Activated CD4-positive, alpha-beta T cell treated with anti-CD3 and anti-CD28 coated beads, Interleukin-2, amount 10 ng/mL, durations not matched to agents 24 days and 14 days (primary cell): ENCODE measurements at regions of chr2 and their contacts with region 1.

Region 1: DNA sequence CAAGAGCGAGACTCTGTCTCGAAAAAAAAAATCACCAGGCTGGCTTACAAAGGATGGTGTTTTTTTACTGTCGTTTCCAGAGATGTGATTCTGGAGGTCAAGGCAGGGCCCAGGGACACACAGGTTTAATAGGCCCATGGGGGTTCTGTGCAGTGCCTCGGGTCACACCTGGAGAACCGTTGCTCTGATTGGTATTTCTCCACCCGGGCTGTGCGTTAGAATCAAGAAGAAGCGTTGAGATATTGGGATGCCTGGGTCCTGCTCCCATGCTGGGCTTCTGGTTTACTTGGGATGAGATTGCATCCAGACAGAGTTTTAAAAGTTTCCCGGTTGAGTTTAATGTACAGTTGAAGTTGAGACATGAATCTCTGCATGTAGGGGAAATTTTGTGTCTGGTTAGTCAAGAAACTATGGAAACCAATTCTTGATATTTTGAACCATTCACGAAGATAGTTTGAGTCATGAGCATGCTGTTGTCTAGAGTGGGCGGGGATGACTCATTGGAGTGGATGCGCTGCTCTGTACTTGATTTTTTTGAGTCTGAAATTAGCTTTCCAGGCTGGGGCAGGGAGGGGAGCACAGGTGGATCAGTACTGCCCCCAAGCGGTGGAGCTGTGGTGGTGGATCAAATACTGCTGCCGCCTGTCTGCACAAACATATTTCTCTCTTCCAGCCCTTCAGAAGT is 50.1 kb downstream of the GREB1 start:
- DNase-seq: peak; percentile 88
- H3K4me3 Mint-ChIP-seq: no peak overlapping the region
- H3K27ac Mint-ChIP-seq: peak overlapping the region; percentile 52
- H3K4me1 Mint-ChIP-seq: peaks cover 18% of the 10 kb centered on the region
- H3K27me3 Mint-ChIP-seq: peaks cover 5% of the 10 kb centered on the region

Region 2: GRCh38 chr2:10832203-10832936 is 751.6 kb before region 1 on chr2:
- intact Hi-C with region 1: loop called (anchors 2 kb)
- DNase-seq: peak; percentile 95
- H3K4me3 Mint-ChIP-seq: no peak overlapping the region
- H3K27ac Mint-ChIP-seq: no peak overlapping the region
- H3K4me1 Mint-ChIP-seq: peaks cover 2% of the 10 kb centered on the region
- H3K27me3 Mint-ChIP-seq: peaks cover 29% of the 10 kb centered on the region

Region 3: DNA sequence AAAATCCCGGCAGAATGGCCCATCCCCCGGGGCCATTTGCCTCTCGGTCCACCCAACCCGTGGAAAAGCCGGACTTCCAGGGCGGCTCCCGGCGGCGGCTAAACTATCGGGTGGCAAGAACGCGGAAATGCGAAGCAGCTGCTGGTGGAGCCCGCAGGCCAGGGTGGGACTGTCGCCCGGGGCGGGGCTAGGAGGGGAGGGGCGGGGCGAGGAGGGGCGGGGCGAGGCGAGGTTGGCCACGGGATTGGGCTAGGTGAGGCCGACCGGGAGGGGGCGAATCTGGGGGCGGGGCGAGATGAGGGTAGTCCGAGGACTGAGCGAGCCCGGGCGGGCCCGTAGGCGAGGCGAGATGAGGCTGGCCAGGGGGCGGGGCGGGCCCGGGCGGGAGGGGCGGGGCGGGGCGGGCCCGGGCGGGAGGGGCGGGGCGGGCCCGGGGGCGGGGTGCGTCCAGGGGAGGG is 429.0 kb before region 1 on chr2:
- intact Hi-C with region 1: loop called (anchors 1 kb)
- DNase-seq: peak; percentile 98
- H3K4me3 Mint-ChIP-seq: peak overlapping the region; percentile 86
- H3K27ac Mint-ChIP-seq: peak overlapping the region; percentile 88
- H3K4me1 Mint-ChIP-seq: peaks cover 8% of the 10 kb centered on the region
- H3K27me3 Mint-ChIP-seq: peaks cover 8% of the 10 kb centered on the region

Region 4: GRCh38 chr2:11344342-11344955 is 239.5 kb before region 1 on chr2 and contains the start of gene ROCK2:
- intact Hi-C with region 1: loop called (anchors 1 kb)
- DNase-seq: peak; percentile 92
- H3K4me3 Mint-ChIP-seq: peak within 1 kb of the TSS; percentile 99
- H3K27ac Mint-ChIP-seq: peak within 1 kb of the TSS; percentile 93
- H3K4me1 Mint-ChIP-seq: peaks cover 16% of the 10 kb centered on the region
- H3K27me3 Mint-ChIP-seq: peaks cover 13% of the 10 kb centered on the region
- total RNA-seq, gene ROCK2: 18.4 and 24.4 TPM in 2 replicates

Region 5: GRCh38 chr2:11556101-11556821 is 27.7 kb before region 1 on chr2:
- intact Hi-C with region 1: no loop called
- DNase-seq: no peak
- H3K4me3 Mint-ChIP-seq: no peak overlapping the region
- H3K27ac Mint-ChIP-seq: no peak overlapping the region
- H3K4me1 Mint-ChIP-seq: peaks cover 2% of the 10 kb centered on the region
- H3K27me3 Mint-ChIP-seq: peaks cover 31% of the 10 kb centered on the region

Region 6: DNA sequence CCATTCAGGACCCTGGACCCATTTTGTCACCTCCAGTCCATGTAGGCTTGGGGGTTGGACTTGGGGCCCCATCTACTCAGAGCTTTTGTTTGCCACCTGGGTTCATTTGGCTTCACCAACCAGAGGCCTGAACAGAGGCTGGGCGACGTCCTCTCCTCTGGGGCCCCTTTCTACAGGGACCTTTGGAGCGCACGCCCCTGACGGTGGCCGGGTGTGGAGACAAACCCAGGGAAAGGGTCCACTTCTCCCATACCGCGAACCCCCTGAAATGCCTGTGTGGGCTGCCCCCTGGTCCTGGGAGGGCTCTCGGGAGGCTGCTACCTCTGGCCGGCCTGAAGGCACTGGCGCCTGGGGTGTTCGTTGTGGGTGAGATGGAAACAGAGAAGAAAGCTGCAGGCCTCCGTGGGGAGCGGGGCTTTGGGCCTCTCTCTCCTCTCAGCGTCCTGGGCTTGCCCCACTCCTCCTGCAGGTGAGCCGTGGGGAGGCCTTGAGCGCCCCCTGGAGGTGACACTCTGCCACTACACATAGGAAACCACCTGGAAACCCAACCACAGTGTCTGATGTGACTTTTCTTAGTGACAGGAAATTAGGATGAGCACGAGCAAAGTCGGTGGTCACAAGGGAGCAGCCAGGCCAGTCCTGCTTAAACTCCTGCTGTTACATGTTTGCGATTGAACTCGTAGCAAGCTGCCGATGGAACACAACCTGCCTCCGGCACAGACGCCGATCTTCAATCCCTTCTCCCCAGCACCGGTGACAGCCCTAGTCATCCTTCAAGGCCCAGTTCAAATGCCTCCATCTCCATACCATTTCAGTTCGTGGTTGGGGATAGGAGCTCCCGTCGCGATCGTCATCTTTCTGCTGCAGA is 98.0 kb after region 1 on chr2:
- intact Hi-C with region 1: loop called (anchors 1 kb)
- DNase-seq: peak; percentile 88
- H3K4me3 Mint-ChIP-seq: no peak overlapping the region
- H3K27ac Mint-ChIP-seq: no peak overlapping the region
- H3K4me1 Mint-ChIP-seq: peaks cover 5% of the 10 kb centered on the region
- H3K27me3 Mint-ChIP-seq: peaks cover 32% of the 10 kb centered on the region

Region 7: GRCh38 chr2:11778923-11779757 is 195.2 kb after region 1 on chr2:
- intact Hi-C with region 1: loop called (anchors 5 kb)
- DNase-seq: peak; percentile 95
- H3K4me3 Mint-ChIP-seq: peak overlapping the region; percentile 74
- H3K27ac Mint-ChIP-seq: peak overlapping the region; percentile 55
- H3K4me1 Mint-ChIP-seq: peaks cover 32% of the 10 kb centered on the region
- H3K27me3 Mint-ChIP-seq: no peaks in the 10 kb centered on the region